CD4-positive, alpha-beta T cell (primary cell): ENCODE measurements at regions of chr6 and their contacts with region 1.

Region 1: GRCh38 chr6:43427406-43428111 is at the start of gene ABCC10:
- DNase-seq: peak; percentile 89 to 98 (median 94)
- ATAC-seq: peak; percentile 90
- H3K4me3 ChIP-seq: peak within 1 kb of the TSS; percentile 80
- H3K4me3 Mint-ChIP-seq: peak within 1 kb of the TSS; percentile 95
- H3K27ac ChIP-seq: peak within 1 kb of the TSS; percentile 73 to 76
- H3K27ac Mint-ChIP-seq: peak within 1 kb of the TSS; percentile 93
- H3K4me1 ChIP-seq: peaks cover 29% of the 10 kb centered on the region
- H3K4me1 Mint-ChIP-seq: peaks cover 26% of the 10 kb centered on the region
- H3K27me3 ChIP-seq: no peaks in the 10 kb centered on the region
- H3K27me3 Mint-ChIP-seq: no peaks in the 10 kb centered on the region
- CTCF ChIP-seq: peak; percentile 46
- total RNA-seq, gene ABCC10: 35.7 to 38.5 TPM

Region 2: DNA sequence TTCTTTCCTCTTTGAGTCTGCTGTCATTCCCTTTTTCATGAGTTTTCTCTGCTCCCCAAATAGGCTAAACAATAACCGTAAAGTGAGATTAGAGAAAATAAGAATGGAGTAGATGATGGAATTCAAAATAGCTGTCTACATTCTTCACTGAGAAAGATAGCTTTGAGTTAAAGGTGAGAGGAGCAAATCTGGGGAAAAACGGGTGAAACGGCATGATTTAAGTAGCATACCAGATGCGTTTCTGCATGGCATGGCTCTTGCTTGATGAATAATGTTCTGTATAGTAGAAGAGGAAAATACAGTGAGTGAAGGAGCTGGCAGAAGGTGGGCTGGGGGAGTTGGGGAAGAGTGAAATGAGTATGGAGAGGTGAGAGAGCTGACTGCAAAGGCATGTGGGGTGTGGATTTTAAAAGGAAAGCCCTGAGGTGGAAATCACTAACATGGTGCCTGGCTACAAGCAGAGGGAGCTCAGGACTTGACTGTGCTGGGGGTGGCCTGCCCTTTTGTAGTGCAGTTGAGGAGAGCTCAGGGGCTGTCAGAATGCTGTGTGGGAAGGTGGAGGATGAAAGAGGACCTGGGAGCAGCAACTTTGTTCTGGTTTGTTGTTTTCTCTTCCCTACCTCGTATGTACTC is 636.9 kb before region 1 on chr6:
- CTCF ChIA-PET with region 1: no interaction called
- POLR2A ChIA-PET with region 1: no interaction called
- intact Hi-C with region 1: loop called in 1 of 2 experiments (anchors 5 kb)
- DNase-seq: peak in 1 of 14 experiments; percentile 32
- ATAC-seq: no peak
- H3K4me3 ChIP-seq: no peak overlapping the region
- H3K4me3 Mint-ChIP-seq: no peak overlapping the region
- H3K27ac ChIP-seq: peak overlapping the region in 1 of 2 donors; percentile 11
- H3K27ac Mint-ChIP-seq: no peak overlapping the region
- H3K4me1 ChIP-seq: peaks cover 47% of the 10 kb centered on the region
- H3K4me1 Mint-ChIP-seq: peaks cover 28% of the 10 kb centered on the region
- H3K27me3 ChIP-seq: no peaks in the 10 kb centered on the region
- H3K27me3 Mint-ChIP-seq: no peaks in the 10 kb centered on the region
- CTCF ChIP-seq: no peak

Region 3: GRCh38 chr6:43318011-43318410 is 109.5 kb before region 1 on chr6:
- CTCF ChIA-PET with region 1: no interaction called
- POLR2A ChIA-PET with region 1: no interaction called
- intact Hi-C with region 1: no loop called
- DNase-seq: no peak
- ATAC-seq: no peak
- H3K4me3 ChIP-seq: no peak overlapping the region
- H3K4me3 Mint-ChIP-seq: no peak overlapping the region
- H3K27ac ChIP-seq: no peak overlapping the region
- H3K27ac Mint-ChIP-seq: no peak overlapping the region
- H3K4me1 ChIP-seq: no peaks in the 10 kb centered on the region
- H3K4me1 Mint-ChIP-seq: no peaks in the 10 kb centered on the region
- H3K27me3 ChIP-seq: no peaks in the 10 kb centered on the region
- H3K27me3 Mint-ChIP-seq: no peaks in the 10 kb centered on the region
- CTCF ChIP-seq: no peak

Region 4: DNA sequence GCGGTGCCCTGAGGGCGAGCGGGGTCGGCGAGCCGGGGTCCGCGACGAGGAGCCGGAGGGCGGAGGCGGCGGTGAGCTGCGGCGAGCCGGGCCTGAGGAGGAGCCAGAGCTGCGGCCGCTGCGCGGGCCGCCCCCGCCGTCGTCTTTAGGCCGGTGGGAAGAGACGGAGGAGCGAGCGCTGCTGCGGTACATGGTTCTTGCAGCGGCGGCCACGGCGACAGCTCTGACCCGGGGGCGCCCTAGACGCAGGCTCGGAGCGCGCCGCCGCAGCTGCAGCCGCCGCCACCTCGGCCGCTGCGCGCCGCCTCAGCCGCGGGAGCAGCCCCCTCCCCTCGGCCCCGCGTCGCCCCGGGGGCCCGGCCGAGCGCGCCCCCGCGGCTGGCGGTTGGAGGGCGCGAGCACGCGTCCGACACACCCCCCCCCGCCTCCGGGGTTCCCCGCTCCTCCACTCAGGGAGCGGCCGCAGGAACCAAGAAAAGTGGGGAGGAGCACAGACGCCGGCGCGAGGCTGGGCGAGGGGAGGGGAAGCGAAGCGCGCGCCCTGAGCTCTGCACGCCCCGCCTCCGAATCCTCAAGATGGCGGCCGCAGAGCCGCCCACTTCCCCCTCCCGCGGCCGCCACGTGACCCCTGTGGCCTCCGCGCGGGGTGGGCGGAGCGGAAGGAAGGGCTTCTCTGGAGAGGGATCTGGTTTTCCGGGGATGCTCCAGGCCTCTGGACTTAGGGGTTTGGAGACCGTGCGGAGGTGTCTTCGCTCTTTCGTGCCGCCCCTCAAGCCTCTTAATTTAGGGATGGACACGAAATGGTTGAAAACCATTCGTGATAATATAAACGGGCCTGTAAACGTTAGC is 58.2 kb before region 1 on chr6 and contains the start of gene ZNF318:
- CTCF ChIA-PET with region 1: interaction called, 9 read pairs
- POLR2A ChIA-PET with region 1: interaction called, 20 read pairs
- intact Hi-C with region 1: loop called (anchors 1 kb)
- DNase-seq: peak; percentile 88 to 99 (median 92)
- ATAC-seq: peak; percentile 95
- H3K4me3 ChIP-seq: peak within 1 kb of the TSS; percentile 77
- H3K4me3 Mint-ChIP-seq: peak within 1 kb of the TSS; percentile 96
- H3K27ac ChIP-seq: peak within 1 kb of the TSS; percentile 76 to 85
- H3K27ac Mint-ChIP-seq: peak within 1 kb of the TSS; percentile 95
- H3K4me1 ChIP-seq: peaks cover 38% of the 10 kb centered on the region
- H3K4me1 Mint-ChIP-seq: peaks cover 49% of the 10 kb centered on the region
- H3K27me3 ChIP-seq: no peaks in the 10 kb centered on the region
- H3K27me3 Mint-ChIP-seq: no peaks in the 10 kb centered on the region
- CTCF ChIP-seq: no peak
- total RNA-seq, gene ZNF318: 20.4 TPM

Region 5: GRCh38 chr6:43454696-43455530 is 27.4 kb after region 1 on chr6:
- CTCF ChIA-PET with region 1: interaction called, 3 read pairs
- POLR2A ChIA-PET with region 1: interaction called, 7 read pairs
- intact Hi-C with region 1: loop called (anchors 1 to 2 kb)
- DNase-seq: peak in 10 of 14 experiments; percentile 13 to 75 (median 43)
- ATAC-seq: peak; percentile 61
- H3K4me3 ChIP-seq: peak overlapping the region; percentile 73
- H3K4me3 Mint-ChIP-seq: peak overlapping the region; percentile 81
- H3K27ac ChIP-seq: peak overlapping the region in 1 of 2 donors; percentile 23
- H3K27ac Mint-ChIP-seq: peak overlapping the region; percentile 61
- H3K4me1 ChIP-seq: peaks cover 19% of the 10 kb centered on the region
- H3K4me1 Mint-ChIP-seq: peaks cover 21% of the 10 kb centered on the region
- H3K27me3 ChIP-seq: no peaks in the 10 kb centered on the region
- H3K27me3 Mint-ChIP-seq: no peaks in the 10 kb centered on the region
- CTCF ChIP-seq: peak; percentile 54

Region 6: GRCh38 chr6:43516697-43517504 is 89.3 kb after region 1 on chr6 and contains the starts of genes POLR1C and YIPF3:
- CTCF ChIA-PET with region 1: no interaction called
- POLR2A ChIA-PET with region 1: interaction called, 10 read pairs
- intact Hi-C with region 1: loop called in 1 of 2 experiments (anchors 2 kb)
- DNase-seq: peak; percentile 91 to 98 (median 96)
- ATAC-seq: peak; percentile 96
- H3K4me3 ChIP-seq: peak within 1 kb of the TSS; percentile 100
- H3K4me3 Mint-ChIP-seq: no peak within 1 kb of the TSS
- H3K27ac ChIP-seq: peak within 1 kb of the TSS; percentile 81 to 90
- H3K27ac Mint-ChIP-seq: no peak within 1 kb of the TSS
- H3K4me1 ChIP-seq: peaks cover 43% of the 10 kb centered on the region
- H3K4me1 Mint-ChIP-seq: peaks cover 33% of the 10 kb centered on the region
- H3K27me3 ChIP-seq: no peaks in the 10 kb centered on the region
- H3K27me3 Mint-ChIP-seq: no peaks in the 10 kb centered on the region
- CTCF ChIP-seq: no peak
- total RNA-seq, gene POLR1C: 46.6 to 47.8 TPM
- total RNA-seq, gene YIPF3: 36.5 to 37.9 TPM

Region 7: GRCh38 chr6:43714311-43715055 is 286.9 kb after region 1 on chr6:
- CTCF ChIA-PET with region 1: no interaction called
- POLR2A ChIA-PET with region 1: no interaction called
- intact Hi-C with region 1: no loop called
- DNase-seq: no peak
- ATAC-seq: no peak
- H3K4me3 ChIP-seq: no peak overlapping the region
- H3K4me3 Mint-ChIP-seq: no peak overlapping the region
- H3K27ac ChIP-seq: no peak overlapping the region
- H3K27ac Mint-ChIP-seq: no peak overlapping the region
- H3K4me1 ChIP-seq: no peaks in the 10 kb centered on the region
- H3K4me1 Mint-ChIP-seq: no peaks in the 10 kb centered on the region
- H3K27me3 ChIP-seq: no peaks in the 10 kb centered on the region
- H3K27me3 Mint-ChIP-seq: peaks cover 10% of the 10 kb centered on the region
- CTCF ChIP-seq: no peak

Region 8: GRCh38 chr6:43746613-43747102 is 319.1 kb after region 1 on chr6:
- CTCF ChIA-PET with region 1: no interaction called
- POLR2A ChIA-PET with region 1: no interaction called
- intact Hi-C with region 1: no loop called
- DNase-seq: no peak
- ATAC-seq: no peak
- H3K4me3 ChIP-seq: no peak overlapping the region
- H3K4me3 Mint-ChIP-seq: no peak overlapping the region
- H3K27ac ChIP-seq: no peak overlapping the region
- H3K27ac Mint-ChIP-seq: no peak overlapping the region
- H3K4me1 ChIP-seq: no peaks in the 10 kb centered on the region
- H3K4me1 Mint-ChIP-seq: no peaks in the 10 kb centered on the region
- H3K27me3 ChIP-seq: no peaks in the 10 kb centered on the region
- H3K27me3 Mint-ChIP-seq: peaks cover 6% of the 10 kb centered on the region
- CTCF ChIP-seq: no peak